ENCODE measurements at regions of chr9 and their contacts with region 1.

Region 1: GRCh38 chr9:131739980-131740648 is at the start of gene RAPGEF1:
- DNase-seq: peak; percentile 89 to 93
- ATAC-seq: peak; percentile 69 to 94 (median 76)
- H3K4me3 ChIP-seq: peak within 1 kb of the TSS; percentile 60
- H3K4me3 Mint-ChIP-seq: peak within 1 kb of the TSS; percentile 91
- H3K27ac ChIP-seq: peak within 1 kb of the TSS; percentile 35
- H3K27ac Mint-ChIP-seq: peak within 1 kb of the TSS; percentile 89 to 94
- H3K4me1 ChIP-seq: peaks cover 58% of the 10 kb centered on the region
- H3K4me1 Mint-ChIP-seq: peaks cover 39 to 52% of the 10 kb centered on the region in 2 donors
- H3K27me3 ChIP-seq: no peaks in the 10 kb centered on the region
- H3K27me3 Mint-ChIP-seq: no peaks in the 10 kb centered on the region
- CTCF ChIP-seq: peak; percentile 80
- total RNA-seq, gene RAPGEF1: 210 to 224 (median 222) TPM

Region 2: GRCh38 chr9:129863059-129863690 is 1876.9 kb before region 1 on chr9:
- intact Hi-C with region 1: loop called (anchors 10 kb)
- DNase-seq: peak; percentile 54 to 82
- ATAC-seq: peak; percentile 87 to 88 (median 87)
- H3K4me3 ChIP-seq: no peak overlapping the region
- H3K4me3 Mint-ChIP-seq: peak overlapping the region; percentile 50
- H3K27ac ChIP-seq: peak overlapping the region; percentile 21
- H3K27ac Mint-ChIP-seq: peak overlapping the region; percentile 82 to 86
- H3K4me1 ChIP-seq: peaks cover 62% of the 10 kb centered on the region
- H3K4me1 Mint-ChIP-seq: peaks cover 45 to 46% of the 10 kb centered on the region in 2 donors
- H3K27me3 ChIP-seq: no peaks in the 10 kb centered on the region
- H3K27me3 Mint-ChIP-seq: no peaks in the 10 kb centered on the region
- CTCF ChIP-seq: no peak

Region 3: GRCh38 chr9:131253891-131254491 is 486.1 kb before region 1 on chr9:
- intact Hi-C with region 1: loop called (anchors 10 kb)
- DNase-seq: no peak
- ATAC-seq: no peak
- H3K4me3 ChIP-seq: no peak overlapping the region
- H3K4me3 Mint-ChIP-seq: peak overlapping the region; percentile 91
- H3K27ac ChIP-seq: peak overlapping the region; percentile 59
- H3K27ac Mint-ChIP-seq: peak overlapping the region; percentile 95 to 99
- H3K4me1 ChIP-seq: peaks cover 84% of the 10 kb centered on the region
- H3K4me1 Mint-ChIP-seq: peaks cover 38 to 56% of the 10 kb centered on the region in 2 donors
- H3K27me3 ChIP-seq: no peaks in the 10 kb centered on the region
- H3K27me3 Mint-ChIP-seq: no peaks in the 10 kb centered on the region
- CTCF ChIP-seq: no peak

Region 4: GRCh38 chr9:131502781-131503625 is 237.1 kb before region 1 on chr9 and contains the start of gene POMT1:
- intact Hi-C with region 1: loop called (anchors 5 kb)
- DNase-seq: peak; percentile 84 to 96
- ATAC-seq: peak; percentile 76 to 85 (median 82)
- H3K4me3 ChIP-seq: peak within 1 kb of the TSS; percentile 76
- H3K4me3 Mint-ChIP-seq: peak within 1 kb of the TSS; percentile 96
- H3K27ac ChIP-seq: peak within 1 kb of the TSS; percentile 34
- H3K27ac Mint-ChIP-seq: peak within 1 kb of the TSS; percentile 61 to 89
- H3K4me1 ChIP-seq: peaks cover 48% of the 10 kb centered on the region
- H3K4me1 Mint-ChIP-seq: peaks cover 43 to 50% of the 10 kb centered on the region in 2 donors
- H3K27me3 ChIP-seq: no peaks in the 10 kb centered on the region
- H3K27me3 Mint-ChIP-seq: no peaks in the 10 kb centered on the region
- CTCF ChIP-seq: no peak
- total RNA-seq, gene POMT1: 35.5 to 38.8 (median 36.3) TPM

Region 5: DNA sequence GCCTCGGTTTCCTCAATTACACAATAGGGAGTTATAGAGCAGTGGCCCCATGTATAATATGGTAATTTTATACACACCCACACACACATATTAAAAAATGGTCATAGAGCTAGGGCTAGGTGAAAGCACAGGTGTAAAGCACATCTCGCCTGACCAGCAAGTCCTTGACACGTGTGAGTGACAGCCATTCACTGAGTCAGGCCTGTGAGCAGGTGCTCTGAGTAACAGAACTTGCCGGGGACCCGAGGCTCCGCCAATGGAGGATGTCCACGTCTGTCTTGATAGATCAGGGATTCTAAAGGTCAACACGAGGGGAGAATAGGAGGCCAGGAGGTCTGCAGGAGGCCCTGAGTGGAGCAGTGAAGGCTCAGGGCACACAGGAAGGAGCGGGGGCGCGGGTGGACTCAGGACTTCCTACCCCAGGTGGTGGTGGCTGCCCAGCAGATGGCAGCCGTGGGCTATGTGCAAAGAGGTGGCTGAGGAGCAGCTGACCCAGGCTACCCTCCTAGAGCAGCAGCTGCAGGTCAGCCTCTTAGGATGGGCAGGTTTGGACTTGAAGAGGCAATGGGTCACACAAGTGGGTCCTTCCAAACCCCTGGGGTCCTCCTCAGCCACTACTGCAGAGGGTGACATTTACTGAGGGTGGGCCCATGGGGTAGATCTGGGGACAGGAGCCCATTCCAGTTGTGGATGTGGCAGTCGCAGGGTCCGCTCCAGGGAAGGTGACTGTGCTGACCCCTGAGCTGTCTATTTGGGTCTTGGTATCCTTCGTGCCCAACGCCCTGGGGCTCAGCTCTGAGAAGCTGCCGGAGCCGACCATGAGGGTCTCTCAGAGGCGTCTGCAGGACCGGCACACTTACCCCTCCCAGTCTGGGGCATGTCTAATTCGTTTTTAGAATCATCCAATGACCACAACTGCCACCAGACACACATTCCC is 148.9 kb before region 1 on chr9:
- intact Hi-C with region 1: loop called (anchors 1 kb)
- DNase-seq: peak; percentile 79 to 88
- ATAC-seq: peak; percentile 92 to 96 (median 94)
- H3K4me3 ChIP-seq: no peak overlapping the region
- H3K4me3 Mint-ChIP-seq: peak overlapping the region; percentile 63
- H3K27ac ChIP-seq: peak overlapping the region; percentile 21
- H3K27ac Mint-ChIP-seq: peak overlapping the region; percentile 81 to 89
- H3K4me1 ChIP-seq: peaks cover 23% of the 10 kb centered on the region
- H3K4me1 Mint-ChIP-seq: peaks cover 33 to 41% of the 10 kb centered on the region in 2 donors
- H3K27me3 ChIP-seq: no peaks in the 10 kb centered on the region
- H3K27me3 Mint-ChIP-seq: no peaks in the 10 kb centered on the region
- CTCF ChIP-seq: peak; percentile 90

Measured in natural killer cell (primary cell).